A549 (cell line): ENCODE measurements at regions of chr22 and their contacts with region 1.

Region 1: GRCh38 chr22:32444068-32444467 is 20.2 kb downstream of the BPIFC start:
- DNase-seq: peak; percentile 13 to 59
- ATAC-seq: peak; percentile 86 to 94
- H3K4me3 ChIP-seq: no peak overlapping the region
- H3K27ac ChIP-seq: no peak overlapping the region
- H3K4me1 ChIP-seq: no peaks in the 10 kb centered on the region
- CTCF ChIP-seq: peak; percentile 29; the same call in 2 of the 3 replicates
- EP300 ChIP-seq: no peak
- POLR2A ChIP-seq: no peak
- RAD21 ChIP-seq: peak; percentile 36 to 53; a peak in 3 of 5 replicates

Region 2: DNA sequence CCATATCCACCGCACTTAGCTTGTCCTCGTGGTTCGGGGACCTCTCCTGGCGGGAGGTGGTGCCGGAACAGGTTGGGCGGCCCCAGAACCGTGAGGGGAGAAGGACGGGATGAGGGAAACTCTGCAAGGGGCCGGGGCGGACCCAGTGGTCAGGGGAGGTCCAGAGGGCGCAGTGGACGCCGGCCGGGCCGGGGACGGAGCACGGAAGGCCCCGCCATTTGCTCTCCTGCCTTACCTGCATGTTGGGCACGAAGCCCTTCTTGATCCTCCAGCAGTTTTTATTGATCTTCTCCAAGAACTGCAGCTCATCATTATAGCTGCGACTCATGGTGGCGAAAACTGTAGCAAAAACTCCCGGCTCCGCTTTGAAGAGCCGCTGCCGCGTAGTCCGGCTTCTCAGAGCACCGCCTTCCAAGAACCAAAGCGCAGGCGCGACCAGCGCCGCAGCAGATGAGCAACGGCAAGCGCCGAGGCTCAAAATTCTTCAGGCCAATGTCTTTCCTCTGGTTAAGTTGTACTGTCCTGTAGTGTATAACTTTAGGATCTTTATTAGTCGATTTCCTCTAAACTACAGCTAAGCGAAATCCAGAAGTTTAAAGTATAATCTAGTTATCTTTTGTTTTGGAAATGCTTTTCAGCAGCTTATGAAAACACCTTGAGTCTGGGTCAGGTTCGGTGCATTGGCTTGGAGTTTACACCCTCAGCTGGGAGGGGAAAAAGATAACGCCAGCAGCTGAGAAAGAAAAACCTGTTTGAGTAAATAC is 32.1 kb before region 1 on chr22 and contains the start of gene RTCB:
- CTCF ChIA-PET with region 1: interaction called, 12 read pairs
- POLR2A ChIA-PET with region 1: no interaction called
- DNase-seq: peak; percentile 56 to 89
- ATAC-seq: peak; percentile 89 to 92
- H3K4me3 ChIP-seq: peak within 1 kb of the TSS; percentile 74
- H3K27ac ChIP-seq: peak within 1 kb of the TSS; percentile 78 to 86
- H3K4me1 ChIP-seq: peaks cover 7% of the 10 kb centered on the region; the same call in 2 of the 3 replicates
- CTCF ChIP-seq: no peak
- EP300 ChIP-seq: no peak
- POLR2A ChIP-seq: peak; percentile 30; the same call in 1 of the 2 replicates
- RAD21 ChIP-seq: no peak
- polyA plus RNA-seq, gene RTCB: 115 and 122 TPM in 2 replicates